Activated CD4-positive, alpha-beta T cell treated with anti-CD3 and anti-CD28 coated beads for 36 hours (primary cell): ENCODE measurements at regions of chr3 and their contacts with region 1.

Region 1: DNA sequence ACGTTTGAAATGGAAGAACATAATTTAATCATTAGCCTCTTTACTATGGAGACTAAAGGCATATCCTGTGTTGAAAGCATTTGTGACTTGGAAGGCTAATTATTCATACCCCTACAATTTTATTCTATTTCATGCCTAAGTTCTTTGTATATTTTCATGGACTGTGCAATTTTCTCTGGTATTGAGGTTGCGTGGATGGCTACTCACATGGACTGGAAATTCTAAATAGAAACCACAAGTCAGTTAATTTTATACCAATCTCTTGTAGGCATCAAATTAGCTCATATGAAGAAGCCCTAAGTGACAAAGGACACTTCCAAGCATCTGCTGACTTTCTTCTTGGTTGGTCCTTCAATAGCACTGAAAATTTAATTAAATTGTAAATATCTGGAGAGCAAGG is 1353.5 kb downstream of the ROBO1 start:
- DNase-seq: no peak
- ATAC-seq: no peak
- H3K4me3 Mint-ChIP-seq: no peak overlapping the region
- H3K27ac Mint-ChIP-seq: no peak overlapping the region
- H3K4me1 Mint-ChIP-seq: no peaks in the 10 kb centered on the region
- H3K27me3 Mint-ChIP-seq: no peaks in the 10 kb centered on the region

Region 2: DNA sequence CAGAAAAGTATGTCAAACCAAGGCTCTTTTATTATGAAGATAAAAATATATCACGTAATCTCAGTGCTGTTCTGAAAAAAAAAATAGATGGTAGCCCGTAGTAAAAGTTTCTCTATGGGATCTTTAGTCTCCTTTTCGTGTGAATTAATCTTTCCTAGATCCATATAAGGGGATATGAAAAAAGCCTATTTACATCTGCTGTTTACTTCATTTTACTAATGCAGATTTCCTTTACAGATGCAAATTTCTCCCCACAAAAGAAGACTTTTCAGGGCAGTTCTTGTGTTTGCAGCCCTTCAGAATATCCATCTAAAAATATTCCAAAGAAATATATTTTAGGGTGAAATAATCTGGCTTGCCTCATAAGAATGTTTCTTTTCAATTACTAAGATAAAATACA is 61.8 kb after region 1 on chr3:
- CTCF ChIA-PET with region 1: no interaction called
- POLR2A ChIA-PET with region 1: no interaction called
- intact Hi-C with region 1: loop called in 1 of 2 experiments (anchors 2 kb)
- DNase-seq: no peak
- ATAC-seq: no peak
- H3K4me3 Mint-ChIP-seq: no peak overlapping the region
- H3K27ac Mint-ChIP-seq: no peak overlapping the region
- H3K4me1 Mint-ChIP-seq: no peaks in the 10 kb centered on the region
- H3K27me3 Mint-ChIP-seq: no peaks in the 10 kb centered on the region